HEK293T (cell line): ENCODE measurements at regions of chr6 and their contacts with region 1.

Region 1: DNA sequence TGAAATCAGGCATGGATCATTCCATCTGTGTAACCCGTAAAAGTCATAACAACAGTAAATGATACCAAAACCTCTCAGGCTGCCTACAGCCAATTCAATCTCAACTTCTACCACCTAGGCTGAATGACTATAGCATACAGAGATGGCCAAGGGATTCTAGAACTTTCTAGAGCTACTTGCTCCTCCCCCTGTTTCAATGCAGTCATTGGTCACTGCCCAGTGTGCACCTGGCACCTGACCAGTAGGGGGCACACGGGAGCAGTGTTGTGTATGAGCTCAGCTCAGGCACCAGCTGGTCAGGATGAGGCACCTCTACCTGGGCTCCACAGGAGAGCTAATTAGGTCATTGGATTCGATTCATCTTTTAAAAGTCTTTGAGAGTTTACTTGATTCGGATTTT is 86.2 kb downstream of the PLEKHG1 start:
- DNase-seq: peak; percentile 77

Region 2: GRCh38 chr6:150486034-150486433 is 199.8 kb before region 1 on chr6:
- CTCF ChIA-PET with region 1: no interaction called
- POLR2A ChIA-PET with region 1: no interaction called
- DNase-seq: no peak

Region 3: DNA sequence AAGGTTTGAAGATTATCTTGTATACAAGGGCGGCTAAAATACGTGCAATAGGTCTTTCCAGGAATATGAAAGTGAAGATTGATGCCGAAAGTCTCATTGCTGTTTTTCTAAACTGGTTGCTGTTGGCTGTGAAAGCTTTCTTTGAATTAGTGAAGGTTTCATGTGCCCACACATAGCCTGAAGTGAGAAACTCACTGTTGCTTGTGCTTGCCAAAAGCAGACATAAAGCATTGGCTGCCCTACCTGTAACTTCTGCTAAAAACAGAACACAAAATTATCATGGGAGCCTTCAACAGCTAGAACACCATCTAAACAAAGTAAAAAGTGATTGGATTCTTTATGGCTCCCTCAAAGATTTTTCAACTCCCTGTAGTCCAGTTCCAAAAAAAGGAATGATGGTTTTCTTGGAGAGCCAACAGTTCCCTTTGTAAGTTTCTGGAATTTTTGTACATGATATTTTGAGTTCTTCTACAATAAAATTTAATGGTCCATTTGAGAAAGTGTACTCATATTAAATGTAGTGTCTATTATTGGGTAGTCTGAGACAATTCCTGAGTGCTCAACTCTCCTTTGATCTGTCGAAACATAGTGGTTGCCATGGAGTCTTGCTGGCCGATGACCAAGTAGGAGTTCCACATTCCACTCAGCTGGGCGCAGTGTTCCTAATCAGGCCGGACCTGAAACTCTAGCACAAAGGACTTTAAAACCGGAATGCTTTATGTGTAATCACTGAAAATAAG is 17.7 kb before region 1 on chr6:
- CTCF ChIA-PET with region 1: interaction called, 34 read pairs
- POLR2A ChIA-PET with region 1: no interaction called
- DNase-seq: peak; percentile 73

Region 4: DNA sequence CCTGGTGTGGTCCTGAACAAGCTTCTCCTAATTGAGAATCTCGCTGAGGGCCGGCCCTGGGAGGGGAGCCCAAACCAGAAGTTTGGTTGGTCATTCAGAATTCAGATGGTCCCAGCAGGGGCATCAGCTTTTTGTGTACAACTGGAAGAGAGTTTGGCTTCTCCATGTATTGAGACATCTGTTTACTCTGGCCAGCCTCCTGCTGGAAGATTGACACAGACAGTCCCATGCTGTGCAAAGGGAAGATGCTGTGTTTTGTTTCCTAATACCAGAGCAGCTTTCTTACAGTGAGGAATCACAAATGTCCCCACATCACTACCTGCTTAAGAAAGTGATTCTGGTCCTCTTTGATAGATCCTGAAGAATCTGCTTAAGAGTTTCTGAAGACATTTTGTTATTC is 11.7 kb after region 1 on chr6:
- CTCF ChIA-PET with region 1: interaction called, 18 read pairs
- POLR2A ChIA-PET with region 1: interaction called, 3 read pairs
- DNase-seq: no peak